A549 (cell line): ENCODE measurements at regions of chrX and their contacts with region 1.

Region 1: DNA sequence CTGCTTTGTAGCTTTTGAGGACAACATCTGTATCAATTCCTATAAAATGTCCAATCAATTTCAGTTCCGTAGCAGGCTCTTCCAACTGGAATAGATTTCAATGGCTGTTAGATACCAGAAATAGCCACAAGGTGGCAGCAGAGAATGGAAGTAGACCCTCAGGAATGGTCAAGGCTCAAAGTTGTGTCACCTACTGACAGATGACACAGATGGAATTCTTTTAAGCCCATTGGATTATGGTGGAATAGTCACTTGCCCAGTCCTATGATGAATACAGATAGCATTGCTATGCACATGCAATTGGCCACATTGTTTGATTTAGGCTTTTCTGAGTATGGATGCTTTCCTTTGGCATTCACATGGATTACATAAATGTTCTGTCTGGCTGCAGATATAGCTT is 130.4 kb upstream of the RADX start:
- DNase-seq: peak; percentile 3 to 48
- ATAC-seq: peak; percentile 77 to 80; a peak in 5 of 6 replicates
- H3K4me3 ChIP-seq: no peak overlapping the region
- H3K27ac ChIP-seq: no peak overlapping the region
- H3K4me1 ChIP-seq: no peaks in the 10 kb centered on the region
- CTCF ChIP-seq: peak; percentile 63
- EP300 ChIP-seq: no peak
- POLR2A ChIP-seq: no peak
- RAD21 ChIP-seq: peak; percentile 75 to 76

Region 2: DNA sequence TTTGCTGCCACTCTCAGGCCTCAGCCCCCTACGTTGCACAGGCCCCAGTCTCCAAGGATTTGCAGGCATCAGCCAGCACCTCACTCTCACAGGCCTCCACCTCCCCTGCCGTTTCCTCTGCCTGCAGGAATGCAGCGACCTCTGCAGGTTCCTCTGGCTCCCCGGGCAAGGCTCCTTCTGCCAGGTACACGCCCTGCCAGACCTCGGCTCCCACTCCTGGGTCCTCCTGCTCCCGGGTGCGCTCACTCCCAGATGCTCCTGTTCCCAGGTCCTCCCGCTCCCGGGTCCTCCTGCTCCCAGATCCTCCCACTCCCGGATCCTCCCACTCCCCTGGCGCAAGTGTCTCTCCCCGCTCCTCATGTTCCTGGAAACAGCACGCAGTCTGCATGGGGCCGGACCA is 13.9 kb before region 1 on chrX:
- CTCF ChIA-PET with region 1: interaction called, 13 read pairs
- POLR2A ChIA-PET with region 1: no interaction called
- DNase-seq: no peak
- ATAC-seq: no peak
- H3K4me3 ChIP-seq: no peak overlapping the region
- H3K27ac ChIP-seq: no peak overlapping the region
- H3K4me1 ChIP-seq: no peaks in the 10 kb centered on the region
- CTCF ChIP-seq: no peak
- EP300 ChIP-seq: no peak
- POLR2A ChIP-seq: no peak
- RAD21 ChIP-seq: no peak

Region 3: DNA sequence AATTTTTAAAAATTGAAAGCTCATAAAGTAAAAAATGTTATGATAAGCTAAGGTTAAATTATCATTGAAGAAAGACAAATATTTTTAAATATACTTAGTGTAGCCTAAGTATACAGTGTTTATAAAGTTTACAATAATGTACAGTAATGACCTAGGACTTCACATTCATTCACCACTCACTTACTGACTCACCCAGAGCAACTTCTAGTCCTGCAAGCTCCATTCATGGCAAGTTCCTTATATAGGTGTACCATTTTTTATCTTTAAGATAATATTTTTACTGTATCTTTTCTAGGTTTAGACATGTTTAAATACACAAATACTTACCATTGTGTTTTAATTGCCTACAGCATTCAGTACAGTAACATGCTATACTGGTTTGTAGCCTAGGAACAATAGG is 18.1 kb after region 1 on chrX:
- CTCF ChIA-PET with region 1: interaction called, 13 read pairs
- POLR2A ChIA-PET with region 1: no interaction called
- DNase-seq: no peak
- ATAC-seq: no peak
- H3K4me3 ChIP-seq: no peak overlapping the region
- H3K27ac ChIP-seq: no peak overlapping the region
- H3K4me1 ChIP-seq: no peaks in the 10 kb centered on the region
- CTCF ChIP-seq: no peak
- EP300 ChIP-seq: no peak
- POLR2A ChIP-seq: no peak
- RAD21 ChIP-seq: no peak

Region 4: GRCh38 chrX:106752086-106752678 is 270.8 kb after region 1 on chrX:
- CTCF ChIA-PET with region 1: interaction called, 27 read pairs
- POLR2A ChIA-PET with region 1: no interaction called
- DNase-seq: peak in 1 of 2 experiments; percentile 4
- ATAC-seq: no peak
- H3K4me3 ChIP-seq: no peak overlapping the region
- H3K27ac ChIP-seq: no peak overlapping the region
- H3K4me1 ChIP-seq: no peaks in the 10 kb centered on the region
- CTCF ChIP-seq: peak; percentile 32; the same call in 2 of the 3 replicates
- EP300 ChIP-seq: no peak
- POLR2A ChIP-seq: no peak
- RAD21 ChIP-seq: peak; percentile 47 to 54; a peak in 2 of 5 replicates

Region 5: DNA sequence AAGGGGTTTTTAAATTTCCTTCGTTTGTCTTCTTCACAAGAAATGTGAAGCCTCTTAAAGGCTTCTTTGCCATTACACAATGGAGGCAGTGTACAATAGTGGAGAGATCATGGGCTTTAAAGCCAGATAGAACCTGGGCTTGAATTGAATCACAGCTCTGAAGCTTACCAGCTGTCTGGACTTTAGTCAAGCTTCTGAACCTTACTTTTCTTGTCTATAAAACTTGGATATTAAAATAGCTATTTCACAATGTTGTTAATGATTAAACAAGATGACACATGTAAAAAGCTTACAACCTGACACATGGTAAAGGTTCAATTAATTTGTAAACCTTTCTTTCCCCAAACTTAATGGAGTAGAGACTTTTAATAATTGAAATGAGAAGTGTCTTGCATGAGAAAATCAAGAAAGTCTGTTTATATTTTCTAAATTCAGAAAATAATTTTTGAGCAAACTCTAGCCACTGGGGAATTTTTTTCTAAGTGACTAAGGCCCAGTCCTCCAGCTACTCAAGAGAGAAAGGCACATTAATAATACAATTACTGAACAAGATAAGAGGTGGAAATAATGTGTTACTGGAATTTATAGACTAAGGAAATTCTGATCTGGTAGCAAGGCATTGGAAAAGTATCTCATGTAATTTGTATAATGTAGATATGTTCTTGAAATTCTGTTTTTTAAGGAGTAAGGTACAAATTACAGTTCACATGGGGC is 299.5 kb after region 1 on chrX:
- CTCF ChIA-PET with region 1: interaction called, 10 read pairs
- POLR2A ChIA-PET with region 1: no interaction called
- DNase-seq: peak in 1 of 2 experiments; percentile 38
- ATAC-seq: peak; percentile 72 to 74
- H3K4me3 ChIP-seq: no peak overlapping the region
- H3K27ac ChIP-seq: peak overlapping the region; percentile 30 to 44; a peak in 2 of 6 replicates
- H3K4me1 ChIP-seq: peaks cover 19% of the 10 kb centered on the region
- CTCF ChIP-seq: no peak
- EP300 ChIP-seq: no peak
- POLR2A ChIP-seq: no peak
- RAD21 ChIP-seq: no peak